ENCODE measurements at regions of chr1 and their contacts with region 1.

Region 1: GRCh38 chr1:43529206-43529731 is 1.4 kb upstream of the PTPRF start:
- DNase-seq: peak; percentile 89
- ATAC-seq: peak; percentile 81
- H3K4me3 Mint-ChIP-seq: no peak overlapping the region
- H3K27ac Mint-ChIP-seq: no peak overlapping the region
- H3K4me1 Mint-ChIP-seq: peaks cover 14% of the 10 kb centered on the region
- H3K27me3 Mint-ChIP-seq: peaks cover 34% of the 10 kb centered on the region
- CTCF ChIP-seq: peak; percentile 95

Region 2: DNA sequence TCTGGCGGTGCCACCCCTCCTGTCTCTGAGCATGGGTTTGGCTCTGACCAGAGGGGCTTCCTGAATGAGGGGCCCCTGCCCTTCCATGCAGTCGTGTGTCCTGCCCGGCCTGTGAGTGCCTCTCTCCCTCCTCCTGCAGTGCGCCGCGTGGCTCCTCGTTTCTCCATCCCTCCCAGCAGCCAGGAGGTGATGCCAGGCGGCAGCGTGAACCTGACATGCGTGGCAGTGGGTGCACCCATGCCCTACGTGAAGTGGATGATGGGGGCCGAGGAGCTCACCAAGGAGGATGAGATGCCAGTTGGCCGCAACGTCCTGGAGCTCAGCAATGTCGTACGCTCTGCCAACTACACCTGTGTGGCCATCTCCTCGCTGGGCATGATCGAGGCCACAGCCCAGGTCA is 59.3 kb after region 1 on chr1:
- CTCF ChIA-PET with region 1: no interaction called
- POLR2A ChIA-PET with region 1: no interaction called
- intact Hi-C with region 1: no loop called
- DNase-seq: no peak
- ATAC-seq: no peak
- H3K4me3 Mint-ChIP-seq: no peak overlapping the region
- H3K27ac Mint-ChIP-seq: no peak overlapping the region
- H3K4me1 Mint-ChIP-seq: no peaks in the 10 kb centered on the region
- H3K27me3 Mint-ChIP-seq: no peaks in the 10 kb centered on the region
- CTCF ChIP-seq: no peak

Region 3: GRCh38 chr1:43644558-43644957 is 115.3 kb after region 1 on chr1:
- CTCF ChIA-PET with region 1: interaction called, 18 read pairs
- POLR2A ChIA-PET with region 1: interaction called, 4 read pairs
- intact Hi-C with region 1: no loop called
- DNase-seq: no peak
- ATAC-seq: no peak
- H3K4me3 Mint-ChIP-seq: no peak overlapping the region
- H3K27ac Mint-ChIP-seq: no peak overlapping the region
- H3K4me1 Mint-ChIP-seq: peaks cover 4% of the 10 kb centered on the region
- H3K27me3 Mint-ChIP-seq: peaks cover 3% of the 10 kb centered on the region
- CTCF ChIP-seq: no peak